Common myeloid progenitor, CD34-positive (primary cell): ENCODE measurements at regions of chr3 and their contacts with region 1.

Region 1: DNA sequence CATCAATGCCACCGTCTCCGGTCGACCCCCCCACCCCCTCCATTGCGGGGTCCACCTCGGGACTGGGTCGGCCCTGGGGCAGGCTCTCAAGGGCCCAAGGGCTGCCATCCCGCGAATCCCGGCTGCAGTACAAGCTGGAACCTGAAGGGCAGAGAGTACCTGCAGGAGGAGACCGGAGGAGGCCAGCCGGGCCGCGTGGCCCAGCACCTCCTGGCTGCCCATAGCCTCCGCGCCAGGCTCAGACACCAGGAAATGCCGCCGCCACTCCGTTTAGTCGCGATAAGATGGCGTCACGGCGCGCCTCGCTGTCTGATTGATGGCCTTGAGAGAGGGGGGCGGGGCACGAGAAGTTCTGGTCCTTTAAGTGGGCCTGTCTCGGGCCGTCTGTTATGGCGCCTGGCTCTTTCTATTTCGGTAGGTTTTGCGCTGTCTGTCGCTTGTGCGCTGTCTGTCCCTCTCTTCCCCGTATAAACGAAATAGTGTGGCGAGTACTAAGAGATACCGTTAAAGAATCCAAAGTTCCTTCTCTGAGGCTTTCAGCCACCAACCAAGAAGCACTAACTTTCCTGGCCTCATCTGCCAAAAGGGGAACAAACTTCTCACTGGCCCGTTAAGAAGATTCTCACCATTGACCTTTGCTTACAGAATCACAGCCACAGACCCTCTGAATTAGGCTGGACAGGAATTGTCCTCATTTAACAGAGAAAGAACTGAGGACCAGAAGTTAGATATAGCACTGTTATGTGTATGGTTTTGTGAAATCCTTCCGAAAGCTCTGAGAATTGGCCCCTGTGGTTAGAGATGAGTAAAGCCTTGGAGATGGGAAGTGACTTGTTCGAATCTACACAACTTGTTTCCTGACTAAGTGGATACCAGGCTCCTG is at the start of gene RFT1:
- DNase-seq: peak; percentile 98
- H3K4me3 ChIP-seq: peak within 1 kb of the TSS; percentile 71 to 97 (median 87)
- H3K27ac ChIP-seq: peak within 1 kb of the TSS; percentile 94 to 97
- H3K4me1 ChIP-seq: peaks cover 15 to 31% (median 25%) of the 10 kb centered on the region in 4 experiments
- H3K27me3 ChIP-seq: no peaks in the 10 kb centered on the region

Region 2: DNA sequence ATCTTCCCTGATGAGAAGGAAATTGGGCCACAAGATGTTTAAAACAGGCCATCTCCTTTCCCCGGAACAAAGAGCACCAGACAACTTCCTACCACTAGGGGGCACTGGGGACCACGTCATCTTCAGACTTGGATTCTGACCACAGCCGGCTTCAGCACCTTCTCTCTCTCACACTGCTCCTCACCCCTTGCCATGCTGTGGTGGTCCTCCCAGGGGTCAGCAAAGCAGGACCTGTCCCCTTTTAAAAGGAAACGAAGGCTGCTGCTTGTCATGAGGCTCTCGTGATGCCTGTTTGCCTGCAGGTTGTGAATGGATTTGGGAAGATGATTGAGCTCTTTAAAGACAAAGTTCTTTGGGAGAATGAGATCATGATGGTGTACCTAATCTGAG is 16.4 kb before region 1 on chr3:
- CTCF ChIA-PET with region 1: interaction called, 118 read pairs
- POLR2A ChIA-PET with region 1: no interaction called
- DNase-seq: peak; percentile 74 to 87 (median 82)
- H3K4me3 ChIP-seq: no peak overlapping the region
- H3K27ac ChIP-seq: no peak overlapping the region
- H3K4me1 ChIP-seq: peaks cover 0 to 28% (median 8%) of the 10 kb centered on the region in 4 experiments
- H3K27me3 ChIP-seq: no peaks in the 10 kb centered on the region

Region 3: DNA sequence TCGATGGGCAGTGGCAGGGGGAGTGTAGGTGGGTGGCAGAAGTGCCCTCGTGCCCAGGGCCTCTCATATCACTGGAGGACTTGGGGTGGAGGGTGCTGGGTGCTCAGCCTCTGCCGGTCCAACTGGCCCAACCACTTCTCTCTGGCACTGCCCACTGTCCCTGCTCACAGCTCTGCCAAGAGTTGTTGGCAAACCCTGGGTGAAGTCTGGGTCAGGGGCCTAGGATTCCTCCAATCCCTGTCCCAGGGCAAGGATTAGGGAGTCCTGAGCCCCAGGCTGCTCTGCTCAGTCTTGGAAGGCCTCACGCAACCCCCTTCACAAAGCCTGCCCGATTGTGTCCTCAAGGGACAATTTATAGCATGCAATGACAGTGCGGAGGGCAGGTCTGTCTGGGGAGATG is 25.3 kb after region 1 on chr3:
- CTCF ChIA-PET with region 1: interaction called, 17 read pairs
- POLR2A ChIA-PET with region 1: no interaction called
- DNase-seq: no peak
- H3K4me3 ChIP-seq: no peak overlapping the region
- H3K27ac ChIP-seq: no peak overlapping the region
- H3K4me1 ChIP-seq: peaks cover 2 to 33% (median 25%) of the 10 kb centered on the region in 4 experiments
- H3K27me3 ChIP-seq: peaks cover 0 to 45% (median 11%) of the 10 kb centered on the region in 5 experiments

Region 4: GRCh38 chr3:53166781-53167291 is 36.4 kb after region 1 on chr3:
- CTCF ChIA-PET with region 1: interaction called, 31 read pairs
- POLR2A ChIA-PET with region 1: no interaction called
- DNase-seq: peak in 2 of 3 donors; percentile 34 to 46
- H3K4me3 ChIP-seq: peak overlapping the region in 1 of 7 experiments; percentile 56
- H3K27ac ChIP-seq: no peak overlapping the region
- H3K4me1 ChIP-seq: peaks cover 3 to 98% (median 50%) of the 10 kb centered on the region in 4 experiments
- H3K27me3 ChIP-seq: no peaks in the 10 kb centered on the region

Region 5: DNA sequence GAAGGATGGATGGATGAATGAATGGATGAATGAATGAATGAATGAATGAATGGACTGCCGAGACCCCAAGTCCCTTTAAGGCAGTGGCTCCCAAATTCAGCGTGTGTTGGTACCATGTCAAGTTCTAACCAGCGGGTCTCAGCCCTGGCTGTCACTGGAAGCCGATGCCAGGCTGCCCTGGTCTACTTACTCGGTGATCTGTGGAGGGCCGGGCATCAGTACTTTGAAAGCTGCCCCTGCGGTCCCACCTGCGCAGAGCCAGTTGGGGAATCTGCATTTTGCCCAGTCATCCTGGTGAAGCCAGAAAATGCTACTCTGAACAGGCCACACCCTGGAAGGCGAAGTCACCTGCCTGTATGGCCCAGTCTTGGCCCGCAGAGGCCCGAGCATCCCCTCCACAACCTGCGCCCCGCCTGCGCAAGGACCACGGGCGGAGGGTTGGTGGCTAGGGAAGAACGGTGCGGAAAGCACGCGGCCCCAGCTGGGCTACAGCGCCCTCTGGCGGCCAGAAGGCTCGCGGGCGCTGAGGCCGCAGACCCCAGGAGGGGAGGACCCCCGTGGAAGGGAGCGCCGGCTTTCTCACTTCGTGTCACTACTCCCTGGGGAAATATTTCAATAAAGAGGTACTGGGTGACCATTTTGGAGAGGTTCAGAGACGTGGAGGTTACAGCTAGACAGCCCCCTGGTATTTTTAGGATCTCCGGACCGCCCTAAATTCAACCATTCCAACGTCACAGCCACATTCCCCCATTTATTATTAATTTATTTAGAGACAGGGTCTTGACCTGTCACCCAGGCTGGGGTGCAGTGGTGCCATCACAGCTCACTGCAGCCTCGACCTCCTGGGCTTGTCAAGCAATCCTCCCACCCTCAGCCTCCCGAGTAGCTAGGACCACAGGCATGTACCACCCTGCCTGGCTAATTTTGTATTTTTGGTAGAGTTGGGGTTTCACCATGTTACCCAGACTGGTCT is 65.5 kb after region 1 on chr3:
- CTCF ChIA-PET with region 1: interaction called, 125 read pairs
- POLR2A ChIA-PET with region 1: interaction called, 4 read pairs
- DNase-seq: peak; percentile 50 to 71 (median 67)
- H3K4me3 ChIP-seq: no peak overlapping the region
- H3K27ac ChIP-seq: no peak overlapping the region
- H3K4me1 ChIP-seq: peaks cover 0 to 12% (median 3%) of the 10 kb centered on the region in 4 experiments
- H3K27me3 ChIP-seq: no peaks in the 10 kb centered on the region